Psoas muscle (tissue), 8 donors: ENCODE measurements at regions of chr10 and their contacts with region 1.

Region 1: GRCh38 chr10:91709394-91709798 is 76.5 kb upstream of the PPP1R3C start:
- DNase-seq: no peak
- ATAC-seq: no peak
- H3K4me3 ChIP-seq: no peak overlapping the region
- H3K27ac ChIP-seq: no peak overlapping the region
- H3K4me1 ChIP-seq: no peaks in the 10 kb centered on the region
- H3K27me3 ChIP-seq: no peaks in the 10 kb centered on the region
- CTCF ChIP-seq: no peak

Region 2: GRCh38 chr10:91665842-91666241 is 43.6 kb before region 1 on chr10:
- intact Hi-C with region 1: loop called in 1 of 2 experiments (anchors 2 kb)
- DNase-seq: no peak
- ATAC-seq: no peak
- H3K4me3 ChIP-seq: no peak overlapping the region
- H3K27ac ChIP-seq: no peak overlapping the region
- H3K4me1 ChIP-seq: no peaks in the 10 kb centered on the region
- H3K27me3 ChIP-seq: no peaks in the 10 kb centered on the region
- CTCF ChIP-seq: no peak